Activated T-helper 1 cell treated with anti-CD3 and anti-CD28 coated beads, Interleukin-12 subunit alpha, Interleukin-12 subunit beta, Interleukin-2, Interleukin-4 antibody, amounts not matched to agents 30 ng/mL and 10 ng/mL and 1 ng/mL, durations not matched to agents 14 hours and 24 hours and 36 hours (primary cell): ENCODE measurements at regions of chr6 and their contacts with region 1.

Region 1: GRCh38 chr6:18155150-18155863 is at the start of gene KDM1B:
- DNase-seq: peak; percentile 99
- H3K4me3 Mint-ChIP-seq: peak within 1 kb of the TSS; percentile 92
- H3K27ac Mint-ChIP-seq: peak within 1 kb of the TSS; percentile 92
- H3K4me1 Mint-ChIP-seq: peaks cover 24% of the 10 kb centered on the region
- H3K27me3 Mint-ChIP-seq: peaks cover 9% of the 10 kb centered on the region
- total RNA-seq, gene KDM1B: 7.1 and 7.2 TPM in 2 replicates

Region 2: GRCh38 chr6:17640477-17640917 is 514.8 kb before region 1 on chr6:
- intact Hi-C with region 1: no loop called
- DNase-seq: no peak
- H3K4me3 Mint-ChIP-seq: no peak overlapping the region
- H3K27ac Mint-ChIP-seq: no peak overlapping the region
- H3K4me1 Mint-ChIP-seq: peaks cover 30% of the 10 kb centered on the region
- H3K27me3 Mint-ChIP-seq: no peaks in the 10 kb centered on the region

Region 3: DNA sequence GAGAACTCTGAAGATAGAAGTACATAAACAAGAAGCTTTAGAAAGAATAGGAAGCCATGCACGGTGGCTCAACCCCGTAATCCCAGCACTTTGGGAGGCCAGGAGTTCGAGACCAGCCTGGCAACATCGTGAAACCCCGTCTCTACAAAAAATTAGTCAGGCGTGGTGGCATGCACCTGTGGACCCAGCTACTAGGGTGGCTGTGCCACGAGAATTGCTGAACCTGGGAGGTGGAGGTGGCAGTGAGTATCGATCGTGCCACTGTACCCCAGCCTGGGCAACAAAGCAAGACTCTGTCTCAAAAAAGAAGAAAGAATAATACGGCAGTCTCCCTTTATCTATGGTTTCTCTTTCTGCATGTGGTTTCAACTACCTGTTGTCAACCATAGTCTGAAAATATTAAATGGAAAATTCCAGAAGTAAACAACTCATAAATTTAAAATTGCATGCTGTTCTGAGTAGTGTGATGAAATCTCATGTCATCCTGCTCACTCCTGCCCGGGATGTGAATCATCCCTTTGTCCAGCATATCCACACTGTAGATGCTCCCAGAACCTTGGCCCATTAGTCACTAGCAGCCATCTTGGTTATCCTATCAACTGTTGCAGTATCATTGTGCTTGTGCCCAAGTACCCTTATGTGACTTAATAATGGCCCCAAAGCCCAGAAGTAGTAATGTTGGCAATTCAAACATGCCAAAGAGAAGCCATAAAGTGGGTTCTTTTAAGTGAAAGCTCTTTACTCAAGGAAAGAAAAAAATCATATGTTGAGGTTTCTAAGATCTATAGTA is 87.0 kb after region 1 on chr6:
- intact Hi-C with region 1: loop called (anchors 5 kb)
- DNase-seq: no peak
- H3K4me3 Mint-ChIP-seq: peak overlapping the region; percentile 49
- H3K27ac Mint-ChIP-seq: peak overlapping the region; percentile 29
- H3K4me1 Mint-ChIP-seq: peaks cover 58% of the 10 kb centered on the region
- H3K27me3 Mint-ChIP-seq: no peaks in the 10 kb centered on the region